GM12878 (cell line): ENCODE measurements at regions of chr15 and their contacts with region 1.

Region 1: GRCh38 chr15:81301815-81302399 is 22.0 kb downstream of the STARD5 start:
- DNase-seq: peak; percentile 80
- ATAC-seq: peak; percentile 78
- H3K4me3 ChIP-seq: peak overlapping the region; percentile 62
- H3K27ac ChIP-seq: peak overlapping the region; percentile 99
- H3K4me1 ChIP-seq: peaks cover 55% of the 10 kb centered on the region
- H3K27me3 ChIP-seq: no peaks in the 10 kb centered on the region
- CTCF ChIP-seq: no peak
- EP300 ChIP-seq: peak; percentile 93 to 96
- POLR2A ChIP-seq: no peak
- RAD21 ChIP-seq: peak; percentile 28; the same call in 1 of the 2 replicates

Region 2: DNA sequence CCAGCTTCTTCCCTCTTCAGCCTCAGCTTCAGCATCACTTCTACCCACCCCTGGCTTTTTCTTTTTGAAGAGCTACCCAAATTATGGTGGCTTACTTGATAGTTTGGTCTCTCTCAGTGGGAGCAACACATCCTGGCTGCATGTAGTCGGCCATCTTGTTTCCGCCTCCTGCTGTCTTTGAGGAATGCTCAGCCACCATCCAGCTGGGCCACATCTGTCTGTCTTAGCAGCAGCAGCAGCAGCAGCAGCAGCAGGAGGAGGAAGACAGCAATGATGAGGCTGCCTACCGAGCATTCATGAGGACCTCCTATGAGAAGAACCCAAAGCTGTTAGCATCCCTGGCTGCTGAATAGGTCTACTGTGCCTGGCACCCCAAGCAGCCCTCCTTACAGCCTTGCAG is 85.5 kb before region 1 on chr15:
- CTCF ChIA-PET with region 1: no interaction called
- POLR2A ChIA-PET with region 1: no interaction called
- RAD21 ChIA-PET with region 1: no interaction called
- SMC1A ChIA-PET with region 1: no interaction called
- in situ Hi-C with region 1: no loop called
- intact Hi-C with region 1: no loop called
- DNase-seq: no peak
- ATAC-seq: no peak
- H3K4me3 ChIP-seq: no peak overlapping the region
- H3K27ac ChIP-seq: no peak overlapping the region
- H3K4me1 ChIP-seq: no peaks in the 10 kb centered on the region
- H3K27me3 ChIP-seq: no peaks in the 10 kb centered on the region
- CTCF ChIP-seq: no peak
- EP300 ChIP-seq: no peak
- POLR2A ChIP-seq: no peak
- RAD21 ChIP-seq: no peak

Region 3: DNA sequence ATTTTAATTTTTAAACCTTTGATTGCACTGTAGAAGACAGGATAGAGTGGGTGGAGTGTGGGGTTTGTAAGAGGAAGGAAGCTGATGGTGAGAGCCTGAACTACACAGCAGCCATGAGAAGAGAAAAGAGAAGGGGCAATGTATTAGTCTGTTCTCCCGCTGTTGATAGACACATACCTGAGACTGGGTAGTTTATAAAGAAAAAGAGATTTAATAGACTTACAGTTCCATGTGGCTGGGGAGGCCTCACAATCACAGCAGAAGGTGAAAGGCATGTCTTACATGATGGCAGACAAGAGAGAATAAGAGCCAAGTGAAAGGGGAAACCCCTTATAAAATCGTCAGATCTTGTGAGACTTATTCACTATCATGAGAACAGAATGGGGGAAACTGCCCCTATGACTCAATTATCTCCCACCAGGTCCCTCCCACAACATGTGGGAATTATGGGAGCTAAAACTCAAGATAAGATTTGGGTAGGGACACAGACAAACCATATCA is 15.2 kb before region 1 on chr15:
- CTCF ChIA-PET with region 1: interaction called, 50 read pairs
- POLR2A ChIA-PET with region 1: interaction called, 103 read pairs
- RAD21 ChIA-PET with region 1: interaction called, 83 read pairs
- SMC1A ChIA-PET with region 1: interaction called, 107 read pairs
- in situ Hi-C with region 1: no loop called
- intact Hi-C with region 1: no loop called
- DNase-seq: no peak
- ATAC-seq: peak; percentile 33
- H3K4me3 ChIP-seq: no peak overlapping the region
- H3K27ac ChIP-seq: peak overlapping the region; percentile 29; the same call in 1 of the 2 replicates
- H3K4me1 ChIP-seq: peaks cover 38% of the 10 kb centered on the region
- H3K27me3 ChIP-seq: no peaks in the 10 kb centered on the region
- CTCF ChIP-seq: no peak
- EP300 ChIP-seq: no peak
- POLR2A ChIP-seq: no peak
- RAD21 ChIP-seq: no peak

Region 4: GRCh38 chr15:81311752-81312464 is 10.0 kb after region 1 on chr15:
- CTCF ChIA-PET with region 1: interaction called, 9 read pairs
- POLR2A ChIA-PET with region 1: interaction called, 23 read pairs
- RAD21 ChIA-PET with region 1: interaction called, 31 read pairs
- SMC1A ChIA-PET with region 1: interaction called, 55 read pairs
- in situ Hi-C with region 1: no loop called
- intact Hi-C with region 1: no loop called
- DNase-seq: no peak
- ATAC-seq: peak; percentile 74
- H3K4me3 ChIP-seq: no peak overlapping the region
- H3K27ac ChIP-seq: peak overlapping the region; percentile 61
- H3K4me1 ChIP-seq: peaks cover 36% of the 10 kb centered on the region
- H3K27me3 ChIP-seq: no peaks in the 10 kb centered on the region
- CTCF ChIP-seq: no peak
- EP300 ChIP-seq: no peak
- POLR2A ChIP-seq: no peak
- RAD21 ChIP-seq: no peak

Region 5: GRCh38 chr15:81323944-81324881 is 22.3 kb after region 1 on chr15 and contains the start of gene STARD5:
- CTCF ChIA-PET with region 1: interaction called, 5 read pairs
- POLR2A ChIA-PET with region 1: interaction called, 6 read pairs
- RAD21 ChIA-PET with region 1: interaction called, 14 read pairs
- SMC1A ChIA-PET with region 1: interaction called, 21 read pairs
- in situ Hi-C with region 1: no loop called
- intact Hi-C with region 1: no loop called
- DNase-seq: peak; percentile 69
- ATAC-seq: peak; percentile 100
- H3K4me3 ChIP-seq: peak within 1 kb of the TSS; percentile 89
- H3K27ac ChIP-seq: peak within 1 kb of the TSS; percentile 32
- H3K4me1 ChIP-seq: peaks cover 8% of the 10 kb centered on the region
- H3K27me3 ChIP-seq: no peaks in the 10 kb centered on the region
- CTCF ChIP-seq: no peak
- EP300 ChIP-seq: no peak
- POLR2A ChIP-seq: peak; percentile 95
- RAD21 ChIP-seq: no peak
- polyA plus RNA-seq, gene STARD5: 2.3 to 3.5 TPM

Region 6: GRCh38 chr15:81336568-81336967 is 34.7 kb after region 1 on chr15:
- CTCF ChIA-PET with region 1: interaction called, 12 read pairs
- POLR2A ChIA-PET with region 1: no interaction called
- RAD21 ChIA-PET with region 1: interaction called, 9 read pairs
- SMC1A ChIA-PET with region 1: interaction called, 10 read pairs
- in situ Hi-C with region 1: no loop called
- intact Hi-C with region 1: no loop called
- DNase-seq: no peak
- ATAC-seq: peak; percentile 89
- H3K4me3 ChIP-seq: no peak overlapping the region
- H3K27ac ChIP-seq: no peak overlapping the region
- H3K4me1 ChIP-seq: no peaks in the 10 kb centered on the region; the same call in 1 of the 2 replicates
- H3K27me3 ChIP-seq: no peaks in the 10 kb centered on the region
- CTCF ChIP-seq: peak; percentile 57 to 73 (median 66); a peak in 5 of 6 replicates
- EP300 ChIP-seq: no peak
- POLR2A ChIP-seq: no peak
- RAD21 ChIP-seq: peak; percentile 83